Right cardiac atrium (tissue), 5 donors: ENCODE measurements at regions of chr1 and their contacts with region 1.

Region 1: DNA sequence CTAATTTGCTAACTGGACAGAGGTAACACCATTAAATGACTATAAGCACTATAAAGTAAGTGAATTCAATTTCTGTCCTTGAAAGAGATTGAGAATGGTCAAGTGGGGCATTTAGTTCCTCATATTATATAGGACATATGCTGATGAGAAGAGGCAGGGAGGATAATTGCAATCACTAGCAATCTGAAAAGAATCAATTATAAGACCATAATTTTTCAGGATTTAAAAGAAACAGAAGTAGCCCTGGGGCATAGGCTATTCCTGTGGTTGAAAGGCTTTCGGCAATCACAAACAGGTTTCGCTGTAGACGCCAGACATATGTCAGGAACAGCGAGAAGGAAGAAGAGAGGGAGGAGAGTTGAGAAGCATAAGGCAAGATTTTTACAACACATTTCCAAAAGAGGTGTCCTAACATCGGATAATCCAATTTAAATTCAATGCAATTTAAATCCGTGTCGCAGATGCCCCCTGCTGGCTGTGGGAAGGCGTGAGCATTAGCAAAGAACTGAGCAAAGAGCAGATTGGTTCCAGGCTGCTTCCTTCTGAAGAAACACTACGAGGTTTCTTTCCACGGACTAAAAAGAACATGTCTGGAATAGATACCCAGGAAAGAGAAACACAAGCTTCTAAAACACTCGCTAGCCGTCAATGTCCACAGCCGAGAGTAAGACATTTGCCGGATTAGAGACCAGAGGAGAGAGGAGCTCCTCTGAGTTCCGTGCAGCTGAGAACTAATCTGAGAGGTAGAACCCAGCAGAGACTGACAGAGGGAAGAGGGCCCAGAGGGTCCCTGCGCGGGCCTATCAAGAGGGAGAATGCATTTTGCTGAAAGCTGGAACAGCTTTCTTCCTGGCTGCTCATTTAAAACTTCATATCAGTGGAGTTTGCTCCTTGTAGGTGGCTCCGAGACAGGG is 27.9 kb downstream of the RGS5 start:
- DNase-seq: peak; percentile 68 to 89 (median 84)
- ATAC-seq: peak; percentile 77 to 79
- H3K4me3 ChIP-seq: peak overlapping the region; percentile 1
- H3K27ac ChIP-seq: no peak overlapping the region
- H3K4me1 ChIP-seq: no peaks in the 10 kb centered on the region
- H3K27me3 ChIP-seq: no peaks in the 10 kb centered on the region

Region 2: DNA sequence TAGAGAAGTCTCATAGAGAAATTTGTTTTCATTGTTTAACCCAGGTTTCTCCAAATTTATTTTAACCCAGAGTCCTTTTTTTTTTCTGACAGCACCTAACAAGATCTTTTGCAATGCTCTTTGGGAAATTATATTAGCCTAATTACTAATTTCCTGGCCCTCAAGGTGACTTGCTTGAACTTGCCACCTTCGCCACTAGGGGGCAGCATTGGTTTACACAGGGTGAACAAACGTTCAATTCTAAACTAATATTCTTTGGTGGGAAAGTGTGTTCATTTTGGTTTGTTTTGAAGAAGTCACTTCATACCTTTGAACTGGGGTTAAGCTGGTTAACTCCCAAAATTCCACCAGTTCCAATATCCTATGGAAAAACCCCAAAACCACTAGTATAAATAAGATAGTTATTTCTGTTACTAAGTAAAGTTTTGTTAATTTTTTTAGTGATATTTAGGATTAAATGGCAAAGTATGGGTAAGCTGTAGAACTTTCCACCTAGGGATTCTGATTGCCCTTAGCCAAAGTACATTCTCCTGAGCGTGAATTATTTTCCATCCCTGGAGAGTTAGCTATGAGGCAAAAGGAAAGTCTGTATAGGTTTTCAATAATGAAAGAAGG is 326.8 kb before region 1 on chr1:
- intact Hi-C with region 1: loop called in 1 of 4 experiments (anchors 10 kb)
- DNase-seq: peak; percentile 81 to 90 (median 84)
- ATAC-seq: peak in 1 of 2 donors; percentile 37
- H3K4me3 ChIP-seq: no peak overlapping the region
- H3K27ac ChIP-seq: no peak overlapping the region
- H3K4me1 ChIP-seq: no peaks in the 10 kb centered on the region
- H3K27me3 ChIP-seq: no peaks in the 10 kb centered on the region

Region 3: GRCh38 chr1:162878000-162878596 is 296.7 kb before region 1 on chr1:
- intact Hi-C with region 1: loop called (anchors 5 to 10 kb)
- DNase-seq: peak; percentile 33 to 59 (median 45)
- ATAC-seq: peak; percentile 64 to 65
- H3K4me3 ChIP-seq: no peak overlapping the region
- H3K27ac ChIP-seq: no peak overlapping the region
- H3K4me1 ChIP-seq: no peaks in the 10 kb centered on the region
- H3K27me3 ChIP-seq: no peaks in the 10 kb centered on the region

Region 4: DNA sequence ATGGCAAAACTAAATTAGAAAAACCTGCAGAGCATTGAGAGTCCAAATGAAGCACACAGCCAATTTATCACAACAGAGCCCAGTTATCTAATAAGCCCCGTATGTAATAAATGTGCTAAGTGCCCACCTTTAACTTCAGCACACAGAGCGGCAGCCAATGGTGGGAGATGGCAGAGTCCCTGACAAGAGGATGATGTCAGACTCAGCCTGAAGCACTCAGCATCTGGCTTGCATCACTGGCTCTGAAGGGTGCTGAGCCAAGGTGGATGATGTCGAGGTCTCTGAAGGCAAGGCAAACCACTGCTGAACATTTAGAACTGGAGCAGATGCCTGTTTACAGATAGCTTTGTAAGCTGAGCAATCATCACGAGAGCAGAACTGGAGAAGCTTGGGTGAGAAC is 265.3 kb after region 1 on chr1:
- intact Hi-C with region 1: no loop called
- DNase-seq: peak in 1 of 3 donors; percentile 35
- ATAC-seq: no peak
- H3K4me3 ChIP-seq: no peak overlapping the region
- H3K27ac ChIP-seq: no peak overlapping the region
- H3K4me1 ChIP-seq: no peaks in the 10 kb centered on the region
- H3K27me3 ChIP-seq: no peaks in the 10 kb centered on the region